Gastrocnemius medialis (tissue), 4 donors: ENCODE measurements at regions of chr17 and their contacts with region 1.

Region 1: DNA sequence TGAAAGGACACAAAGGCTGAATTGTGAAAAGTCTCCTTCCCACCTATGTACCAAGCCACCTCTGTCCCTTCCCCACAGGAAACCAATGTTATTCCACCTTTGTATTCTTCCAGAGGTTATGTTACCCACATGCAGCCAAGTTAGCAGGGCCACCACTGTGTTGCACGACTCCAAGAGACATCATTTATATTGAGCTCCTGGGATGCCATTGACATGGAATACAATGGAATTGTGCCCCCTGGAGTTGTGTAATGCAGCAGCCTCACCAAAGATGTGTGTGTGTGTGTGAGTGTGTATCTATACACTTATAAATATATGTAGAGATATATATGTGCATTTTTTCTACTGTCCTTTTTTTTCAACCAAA is 21.6 kb upstream of the MSI2 start:
- DNase-seq: no peak
- ATAC-seq: no peak
- H3K4me3 ChIP-seq: no peak overlapping the region
- H3K27ac ChIP-seq: no peak overlapping the region
- H3K4me1 ChIP-seq: no peaks in the 10 kb centered on the region
- H3K27me3 ChIP-seq: no peaks in the 10 kb centered on the region
- CTCF ChIP-seq: no peak
- POLR2A ChIP-seq: no peak

Region 2: GRCh38 chr17:57174591-57174990 is 60.1 kb before region 1 on chr17:
- in situ Hi-C with region 1: no loop called
- intact Hi-C with region 1: no loop called
- DNase-seq: no peak
- ATAC-seq: no peak
- H3K4me3 ChIP-seq: no peak overlapping the region
- H3K27ac ChIP-seq: no peak overlapping the region
- H3K4me1 ChIP-seq: no peaks in the 10 kb centered on the region
- H3K27me3 ChIP-seq: no peaks in the 10 kb centered on the region
- CTCF ChIP-seq: no peak
- POLR2A ChIP-seq: no peak

Region 3: DNA sequence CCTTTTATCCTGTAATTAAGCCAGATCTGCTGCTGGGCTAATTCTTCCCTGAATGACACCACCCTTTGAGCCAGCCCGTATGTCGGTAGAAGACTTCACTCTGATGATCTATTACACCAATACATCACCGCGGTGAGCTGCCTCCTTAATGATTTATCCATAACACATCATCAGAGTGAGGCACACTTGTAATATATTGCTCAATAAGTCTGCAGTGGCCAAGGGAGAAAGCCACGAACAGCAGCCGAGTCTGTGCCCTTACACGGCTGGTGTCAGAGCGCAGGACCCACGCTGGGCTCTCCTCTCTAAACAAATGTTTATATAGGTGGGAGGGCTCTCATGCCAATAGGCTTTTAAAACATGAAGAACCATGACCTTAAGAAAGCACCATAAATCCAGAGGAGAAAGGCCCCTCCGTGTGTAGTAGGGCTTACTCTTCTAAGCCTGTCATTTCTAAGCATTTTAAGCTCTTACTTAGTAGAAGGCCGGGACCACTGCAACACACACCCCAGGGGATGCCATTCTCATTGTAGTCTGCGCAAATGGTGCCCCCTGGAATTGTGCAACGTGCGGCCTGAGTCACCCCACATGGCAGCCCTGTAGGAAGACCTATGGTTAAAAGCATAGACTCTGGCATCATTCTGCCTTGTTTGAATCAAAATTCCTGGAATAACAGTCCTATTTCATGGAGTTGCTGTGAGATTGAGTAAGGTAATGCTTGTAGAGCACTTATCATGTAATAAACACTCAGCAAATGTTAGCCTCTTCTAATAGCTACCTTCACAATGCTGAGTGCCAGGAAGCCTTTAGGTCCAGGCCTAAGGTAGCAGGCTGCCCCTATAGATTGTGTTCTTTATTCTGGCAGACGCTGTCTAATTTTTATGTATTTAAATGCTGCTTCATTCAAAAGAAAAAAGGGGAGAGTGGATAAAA is 589.0 kb after region 1 on chr17:
- in situ Hi-C with region 1: loop called in 2 of 4 experiments (anchors 10 to 25 kb)
- intact Hi-C with region 1: no loop called
- DNase-seq: no peak
- ATAC-seq: no peak
- H3K4me3 ChIP-seq: no peak overlapping the region
- H3K27ac ChIP-seq: no peak overlapping the region
- H3K4me1 ChIP-seq: no peaks in the 10 kb centered on the region
- H3K27me3 ChIP-seq: no peaks in the 10 kb centered on the region
- CTCF ChIP-seq: no peak
- POLR2A ChIP-seq: no peak